ENCODE measurements at regions of chr6 and their contacts with region 1.

Region 1: DNA sequence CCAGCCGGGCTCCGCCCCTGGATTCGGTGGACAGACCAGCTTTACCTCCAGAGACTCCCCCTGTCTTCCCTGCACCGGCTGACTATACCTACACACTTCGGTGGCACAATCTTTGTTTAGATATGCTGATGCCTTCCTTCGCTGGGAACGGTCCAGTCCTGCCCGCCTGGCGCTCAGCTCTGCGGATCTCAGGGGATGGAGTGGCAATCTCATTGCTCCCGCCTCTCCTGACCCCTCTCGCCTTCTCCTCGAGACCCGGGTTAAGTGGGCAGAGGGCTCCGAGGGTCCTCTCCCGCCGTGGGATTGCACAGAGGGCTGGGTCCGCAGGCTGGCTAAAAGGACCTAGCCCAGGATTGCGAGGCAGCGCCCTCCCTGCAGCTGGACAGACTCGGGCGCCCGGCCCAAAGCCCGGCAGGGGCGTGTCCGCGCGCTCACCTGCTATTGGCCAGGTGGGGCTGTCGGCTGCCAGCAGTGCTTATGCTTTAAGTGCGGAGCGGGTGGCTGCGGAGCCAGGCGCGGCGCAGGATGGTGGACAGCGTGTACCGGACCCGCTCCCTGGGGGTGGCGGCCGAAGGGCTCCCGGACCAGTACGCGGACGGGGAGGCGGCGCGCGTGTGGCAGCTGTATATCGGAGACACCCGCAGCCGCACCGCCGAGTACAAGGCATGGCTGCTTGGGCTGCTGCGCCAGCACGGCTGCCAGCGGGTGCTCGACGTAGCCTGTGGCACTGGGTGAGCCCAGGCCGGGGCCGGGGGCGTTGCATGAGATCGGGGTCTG is at the start of gene GNMT:
- DNase-seq: peak; percentile 79
- H3K27ac ChIP-seq: peak within 1 kb of the TSS; percentile 63; the same call in 1 of the 2 replicates
- CTCF ChIP-seq: no peak

Region 2: GRCh38 chr6:43012364-43012763 is 51.9 kb after region 1 on chr6:
- CTCF ChIA-PET with region 1: no interaction called
- POLR2A ChIA-PET with region 1: interaction called, 14 read pairs
- DNase-seq: no peak
- H3K27ac ChIP-seq: peak overlapping the region; percentile 78
- CTCF ChIP-seq: no peak

Measured in RWPE1 (cell line).